ENCODE measurements at regions of chr12 and their contacts with region 1.

Region 1: DNA sequence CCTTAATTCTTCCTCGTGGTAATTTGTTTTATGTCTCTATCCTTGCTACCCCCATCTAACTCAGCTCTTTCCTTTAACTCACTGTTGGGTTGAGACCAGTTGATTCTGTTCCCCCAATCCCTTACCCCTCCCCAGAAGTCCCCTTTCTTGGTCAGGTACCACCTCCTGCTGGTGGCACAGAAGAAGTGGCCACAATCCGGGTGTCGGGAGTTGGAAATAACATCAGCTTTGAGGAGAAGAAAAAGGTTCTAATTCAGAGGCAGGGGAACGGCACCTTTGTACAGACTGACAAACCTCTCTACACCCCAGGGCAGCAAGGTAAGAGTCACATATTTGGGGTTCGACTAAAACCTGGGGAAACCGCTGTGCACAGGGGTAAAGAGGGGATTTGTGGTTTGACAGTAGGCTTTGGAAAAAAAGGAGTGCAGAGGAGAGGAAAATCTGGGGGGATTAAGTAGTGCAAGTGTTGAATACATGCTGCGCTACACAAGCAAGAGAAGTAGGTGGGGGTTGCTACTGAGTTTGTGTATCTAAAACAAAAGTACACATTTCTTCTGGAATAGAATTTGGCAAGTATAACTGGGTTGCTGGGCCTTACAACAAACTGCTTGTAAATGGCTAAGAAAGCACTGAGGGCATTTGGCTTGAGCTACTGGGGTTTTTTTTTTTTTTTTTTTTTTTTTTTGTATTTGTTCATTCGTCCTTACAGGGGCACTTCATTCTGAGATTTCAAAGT is 1.3 kb downstream of the A2ML1 start:
- DNase-seq: no peak

Region 2: DNA sequence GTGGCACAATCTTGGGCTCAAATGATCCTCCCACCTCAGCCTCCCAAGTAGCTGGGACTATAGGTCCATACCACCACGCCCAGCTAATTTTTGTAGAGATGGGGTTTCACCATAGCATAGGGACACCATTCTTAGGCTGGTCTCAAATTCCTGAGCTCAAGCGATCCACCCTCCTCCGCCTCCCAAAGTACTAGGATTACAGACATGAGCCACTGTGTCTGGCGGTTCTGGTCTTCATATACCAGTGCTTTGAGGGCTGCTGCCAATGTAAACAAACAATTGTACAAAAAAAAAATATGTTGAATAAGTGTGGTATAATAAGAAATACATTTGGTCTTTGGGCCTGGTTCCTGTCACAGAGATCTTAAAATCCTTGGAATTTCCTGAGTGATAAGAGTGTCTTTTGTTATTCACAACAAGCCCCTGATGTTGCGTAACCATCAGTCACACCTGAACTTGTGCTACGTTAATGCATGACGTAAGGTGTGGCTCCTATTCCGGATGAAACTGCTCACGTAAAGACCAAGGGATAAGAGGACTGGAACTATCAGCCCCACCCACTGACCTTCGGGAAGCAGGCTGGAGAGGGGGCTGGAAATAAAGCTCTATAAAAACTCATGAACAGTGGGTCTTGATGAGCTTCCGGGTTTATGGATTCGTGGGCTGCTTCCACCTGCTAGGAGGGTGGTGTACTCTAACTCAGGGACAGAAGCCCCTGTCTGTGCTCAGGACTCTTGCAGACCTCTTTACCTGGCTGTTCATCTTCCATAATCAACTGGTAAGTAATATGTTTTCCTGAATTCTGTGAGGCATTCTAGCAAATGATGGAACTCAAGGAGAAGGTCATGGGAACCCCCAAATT is 142.5 kb before region 1 on chr12:
- intact Hi-C with region 1: loop called (anchors 5 to 10 kb)
- DNase-seq: no peak

Region 3: GRCh38 chr12:8687846-8688601 is 135.7 kb before region 1 on chr12:
- intact Hi-C with region 1: loop called (anchors 5 to 10 kb)
- DNase-seq: no peak

Region 4: DNA sequence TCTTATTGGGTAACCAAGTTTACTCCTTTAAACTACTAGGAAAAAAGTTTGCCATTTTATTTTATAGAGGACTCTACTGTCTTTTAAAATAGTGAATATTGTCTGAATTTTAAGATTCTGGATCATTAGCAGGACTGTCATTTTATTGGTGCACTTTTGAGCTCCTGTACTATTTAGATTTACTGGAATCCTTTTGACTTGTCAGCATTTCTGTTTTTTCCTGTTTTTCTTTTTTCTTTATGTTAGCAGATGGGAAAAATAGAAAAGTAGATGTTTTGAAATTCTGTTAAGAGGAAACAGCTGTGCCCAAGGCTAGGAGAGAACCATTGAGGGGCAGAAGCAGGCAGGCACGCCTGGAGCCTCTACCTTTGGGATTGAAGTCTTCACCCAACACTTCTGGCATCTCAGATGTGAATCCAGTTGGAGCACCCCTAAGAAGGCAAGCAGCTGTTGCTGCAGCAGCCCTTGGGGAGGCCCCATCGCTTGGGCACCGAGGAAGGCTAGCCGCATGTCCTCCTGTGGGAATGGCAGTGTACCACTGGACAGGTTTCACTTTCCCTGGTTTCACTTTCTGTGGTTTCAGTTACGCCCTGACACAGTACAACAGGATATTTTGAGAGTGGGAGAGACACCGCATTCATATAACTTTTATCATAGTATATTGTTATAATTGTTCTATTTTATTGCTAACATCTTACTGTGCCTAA is 114.5 kb before region 1 on chr12:
- intact Hi-C with region 1: no loop called
- DNase-seq: no peak

Region 5: DNA sequence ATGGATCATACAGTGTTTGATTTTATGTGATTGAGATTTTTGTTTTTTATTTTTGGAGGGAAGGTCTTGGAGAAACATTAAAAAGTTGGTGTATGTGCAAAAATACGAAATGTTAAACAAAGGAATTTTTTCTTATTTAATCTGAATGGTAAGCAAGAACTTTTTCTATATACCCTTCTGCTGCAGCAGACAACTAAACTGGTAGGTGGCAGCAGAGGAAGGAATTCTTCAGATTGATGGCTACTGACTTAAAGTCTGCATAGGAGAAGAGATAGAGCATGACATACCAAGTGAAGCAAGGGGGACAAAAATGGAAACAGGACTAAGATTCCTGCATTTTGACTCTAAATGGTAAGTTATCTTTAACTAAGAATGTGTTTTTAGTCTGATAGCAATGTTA is 43.3 kb before region 1 on chr12:
- intact Hi-C with region 1: loop called in 1 of 2 experiments (anchors 1 kb)
- DNase-seq: no peak